AG04450 (cell line): ENCODE measurements at regions of chr5 and their contacts with region 1.

Region 1: GRCh38 chr5:149749481-149750365 is 19.6 kb downstream of the PPARGC1B start:
- DNase-seq: no peak
- H3K4me3 ChIP-seq: no peak overlapping the region
- H3K27ac ChIP-seq: no peak overlapping the region
- H3K27me3 ChIP-seq: peaks cover 9% of the 10 kb centered on the region
- CTCF ChIP-seq: no peak

Region 2: DNA sequence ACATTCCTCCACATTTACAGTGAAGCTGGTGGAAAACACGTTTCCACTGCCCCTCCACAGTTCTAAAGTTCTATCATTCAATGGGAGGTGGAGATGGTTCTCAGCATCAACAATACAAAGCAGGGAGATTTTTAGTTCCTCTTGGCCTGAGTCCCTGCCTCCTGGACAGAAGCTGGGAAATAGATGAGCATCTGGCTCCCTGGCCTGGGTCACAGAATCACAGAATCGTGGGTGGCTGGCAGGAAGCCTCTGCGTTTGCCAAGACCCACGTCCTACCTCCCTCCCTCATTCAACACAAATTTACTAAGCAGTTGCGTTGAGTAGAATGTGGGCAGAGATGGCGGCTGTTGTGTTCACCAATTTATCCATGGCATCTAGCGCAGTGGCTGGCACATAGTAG is 24.8 kb before region 1 on chr5:
- CTCF ChIA-PET with region 1: interaction called, 11 read pairs
- POLR2A ChIA-PET with region 1: no interaction called
- DNase-seq: no peak
- H3K4me3 ChIP-seq: no peak overlapping the region
- H3K27ac ChIP-seq: no peak overlapping the region
- H3K27me3 ChIP-seq: peaks cover 47% of the 10 kb centered on the region
- CTCF ChIP-seq: no peak

Region 3: GRCh38 chr5:149932445-149933350 is 183.0 kb after region 1 on chr5:
- CTCF ChIA-PET with region 1: no interaction called
- POLR2A ChIA-PET with region 1: no interaction called
- DNase-seq: no peak
- H3K4me3 ChIP-seq: no peak overlapping the region
- H3K27ac ChIP-seq: no peak overlapping the region
- H3K27me3 ChIP-seq: peaks cover 3% of the 10 kb centered on the region
- CTCF ChIP-seq: peak; percentile 45